PC-9 (cell line): ENCODE measurements at regions of chr3 and their contacts with region 1.

Region 1: DNA sequence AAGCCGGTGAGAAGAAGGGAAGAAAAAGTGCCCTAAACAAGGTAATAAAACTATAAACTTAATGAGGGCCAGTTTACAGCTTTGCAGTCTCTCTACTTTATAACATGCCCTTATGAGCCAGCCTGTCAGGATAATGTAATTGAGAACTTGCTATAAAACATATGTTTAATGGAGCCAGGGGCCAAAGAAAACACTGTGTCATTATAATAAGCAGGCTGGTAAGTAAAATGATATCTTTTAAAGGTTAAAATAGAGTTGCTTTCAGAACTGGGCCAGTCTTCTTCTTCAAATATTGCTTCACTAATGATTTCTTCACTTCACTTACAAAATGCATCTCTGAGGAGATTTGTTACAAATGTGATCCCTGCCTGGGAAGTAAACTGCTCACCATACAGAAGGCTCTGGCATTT is 192.5 kb downstream of the SHOX2 start:
- DNase-seq: no peak
- H3K4me3 ChIP-seq: no peak overlapping the region
- H3K27ac ChIP-seq: no peak overlapping the region
- H3K4me1 ChIP-seq: no peaks in the 10 kb centered on the region
- H3K27me3 ChIP-seq: no peaks in the 10 kb centered on the region
- CTCF ChIP-seq: no peak

Region 2: GRCh38 chr3:157335198-157336076 is 578.3 kb before region 1 on chr3:
- CTCF ChIA-PET with region 1: no interaction called
- POLR2A ChIA-PET with region 1: no interaction called
- intact Hi-C with region 1: no loop called
- DNase-seq: peak in 1 of 2 experiments; percentile 43
- H3K4me3 ChIP-seq: no peak overlapping the region
- H3K27ac ChIP-seq: no peak overlapping the region
- H3K4me1 ChIP-seq: peaks cover 15% of the 10 kb centered on the region; the same call in 1 of the 2 replicates
- H3K27me3 ChIP-seq: no peaks in the 10 kb centered on the region
- CTCF ChIP-seq: no peak

Region 3: GRCh38 chr3:157631478-157631877 is 282.3 kb before region 1 on chr3:
- CTCF ChIA-PET with region 1: no interaction called
- POLR2A ChIA-PET with region 1: interaction called, 13 read pairs
- intact Hi-C with region 1: no loop called
- DNase-seq: no peak
- H3K4me3 ChIP-seq: no peak overlapping the region
- H3K27ac ChIP-seq: no peak overlapping the region
- H3K4me1 ChIP-seq: no peaks in the 10 kb centered on the region; the same call in 1 of the 2 replicates
- H3K27me3 ChIP-seq: no peaks in the 10 kb centered on the region
- CTCF ChIP-seq: no peak

Region 4: GRCh38 chr3:158352551-158352950 is 438.8 kb after region 1 on chr3:
- CTCF ChIA-PET with region 1: no interaction called
- POLR2A ChIA-PET with region 1: no interaction called
- intact Hi-C with region 1: no loop called
- DNase-seq: no peak
- H3K4me3 ChIP-seq: no peak overlapping the region
- H3K27ac ChIP-seq: no peak overlapping the region
- H3K4me1 ChIP-seq: no peaks in the 10 kb centered on the region
- H3K27me3 ChIP-seq: no peaks in the 10 kb centered on the region
- CTCF ChIP-seq: no peak

Region 5: GRCh38 chr3:159293493-159293892 is 1379.7 kb after region 1 on chr3:
- CTCF ChIA-PET with region 1: no interaction called
- POLR2A ChIA-PET with region 1: no interaction called
- intact Hi-C with region 1: no loop called
- DNase-seq: no peak
- H3K4me3 ChIP-seq: no peak overlapping the region
- H3K27ac ChIP-seq: no peak overlapping the region
- H3K4me1 ChIP-seq: no peaks in the 10 kb centered on the region
- H3K27me3 ChIP-seq: no peaks in the 10 kb centered on the region
- CTCF ChIP-seq: no peak